ENCODE measurements at regions of chr1 and their contacts with region 1.

Region 1: GRCh38 chr1:201042779-201043461 is 19.4 kb upstream of the KIF21B start:
- DNase-seq: peak; percentile 41
- H3K4me3 ChIP-seq: no peak overlapping the region
- H3K27ac ChIP-seq: no peak overlapping the region
- H3K4me1 ChIP-seq: no peaks in the 10 kb centered on the region
- H3K27me3 ChIP-seq: no peaks in the 10 kb centered on the region
- CTCF ChIP-seq: peak; percentile 90 to 92

Region 2: DNA sequence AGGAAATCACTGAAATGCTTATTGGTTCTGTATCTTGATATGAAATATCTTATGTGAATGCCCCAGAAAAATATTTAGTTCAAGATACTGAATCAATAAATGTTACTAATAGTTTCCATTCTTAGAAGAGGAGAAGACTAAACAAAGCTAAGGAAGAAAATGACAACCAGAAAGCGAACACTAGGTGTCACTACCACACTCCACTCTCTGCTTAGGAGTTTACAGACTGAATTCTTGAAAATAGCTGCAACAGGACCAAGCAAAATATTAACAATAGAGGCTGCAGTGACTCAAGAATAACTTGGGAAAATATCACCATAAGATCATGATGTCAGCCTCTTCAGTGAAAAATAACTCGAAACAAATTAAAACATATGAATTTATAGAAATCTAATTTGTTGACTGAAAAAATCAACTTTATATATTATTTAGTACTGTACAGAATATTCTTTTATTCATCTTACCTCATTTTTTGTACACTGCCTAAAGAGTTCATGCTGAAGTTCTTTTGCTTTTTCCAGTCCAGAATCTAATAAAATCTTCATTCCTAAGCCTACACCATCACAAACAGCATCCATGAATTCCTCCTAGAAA is 484.0 kb before region 1 on chr1:
- CTCF ChIA-PET with region 1: interaction called, 4 read pairs
- dilution Hi-C with region 1: no loop called
- in situ Hi-C with region 1: loop called (anchors 25 kb)
- intact Hi-C with region 1: loop called (anchors 1 kb)
- DNase-seq: peak; percentile 35
- H3K4me3 ChIP-seq: no peak overlapping the region
- H3K27ac ChIP-seq: no peak overlapping the region
- H3K4me1 ChIP-seq: no peaks in the 10 kb centered on the region
- H3K27me3 ChIP-seq: no peaks in the 10 kb centered on the region
- CTCF ChIP-seq: peak; percentile 60 to 73

Region 3: GRCh38 chr1:200866521-200866920 is 176.4 kb before region 1 on chr1:
- CTCF ChIA-PET with region 1: no interaction called
- dilution Hi-C with region 1: no loop called
- in situ Hi-C with region 1: no loop called
- intact Hi-C with region 1: loop called (anchors 5 kb)
- DNase-seq: no peak
- H3K4me3 ChIP-seq: no peak overlapping the region
- H3K27ac ChIP-seq: no peak overlapping the region
- H3K4me1 ChIP-seq: no peaks in the 10 kb centered on the region
- H3K27me3 ChIP-seq: no peaks in the 10 kb centered on the region
- CTCF ChIP-seq: no peak

Region 4: DNA sequence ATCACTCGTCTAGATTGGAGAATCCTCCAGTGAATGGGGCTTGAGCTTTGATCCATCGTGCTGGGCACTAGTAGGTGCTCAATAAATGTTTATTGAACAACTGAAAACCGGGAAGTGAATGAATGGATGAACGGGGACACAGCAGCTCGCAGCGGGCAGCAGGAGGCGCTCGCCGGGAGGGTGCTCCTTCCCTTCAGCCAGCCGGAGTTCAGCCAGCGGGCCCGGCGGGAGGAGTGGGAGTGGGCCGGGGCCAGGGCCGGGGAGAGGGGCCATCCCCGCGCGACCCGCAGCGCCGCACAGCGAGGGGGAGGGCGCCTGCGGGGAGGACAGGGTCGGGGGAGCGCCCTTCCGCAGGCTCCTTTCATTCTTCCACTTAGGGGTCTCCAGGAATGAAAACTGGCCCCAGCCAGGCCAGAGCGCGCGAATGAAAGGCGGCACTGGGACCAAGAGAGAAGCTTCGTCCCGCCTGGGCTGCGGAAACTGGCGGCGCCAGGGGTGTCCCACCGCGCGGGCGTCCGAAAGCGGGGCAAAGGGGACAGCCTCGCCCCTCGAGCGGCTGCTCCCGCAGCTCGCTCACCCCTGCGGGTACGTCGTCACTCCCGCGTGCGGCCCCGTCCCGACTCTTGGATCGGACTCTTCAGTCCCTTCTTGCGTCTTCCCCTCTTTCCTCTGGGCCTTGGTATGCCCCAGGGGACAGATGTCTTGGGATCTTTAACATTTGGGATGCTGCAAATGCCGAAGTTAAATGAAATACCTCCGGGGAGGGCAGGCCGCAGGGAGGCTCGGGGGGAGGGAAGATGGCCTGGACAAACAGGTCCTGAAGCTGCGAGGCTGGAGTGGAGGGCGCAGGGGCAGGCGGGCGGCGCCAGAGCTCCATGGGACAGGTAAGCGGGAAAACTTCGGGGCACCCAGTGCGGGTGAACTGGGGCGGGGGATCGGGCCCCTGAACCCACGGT is 151.8 kb before region 1 on chr1:
- CTCF ChIA-PET with region 1: no interaction called
- dilution Hi-C with region 1: no loop called
- in situ Hi-C with region 1: loop called in 1 of 2 experiments (anchors 10 kb)
- intact Hi-C with region 1: loop called (anchors 1 kb)
- DNase-seq: peak; percentile 65
- H3K4me3 ChIP-seq: peak overlapping the region; percentile 38 to 60 (median 56)
- H3K27ac ChIP-seq: peak overlapping the region; percentile 55
- H3K4me1 ChIP-seq: peaks cover 51% of the 10 kb centered on the region
- H3K27me3 ChIP-seq: no peaks in the 10 kb centered on the region
- CTCF ChIP-seq: peak; percentile 32 to 63

Region 5: GRCh38 chr1:200979574-200980451 is 63.1 kb before region 1 on chr1:
- CTCF ChIA-PET with region 1: no interaction called
- dilution Hi-C with region 1: no loop called
- in situ Hi-C with region 1: loop called in 1 of 2 experiments (anchors 5 kb)
- intact Hi-C with region 1: no loop called
- DNase-seq: peak; percentile 8
- H3K4me3 ChIP-seq: no peak overlapping the region
- H3K27ac ChIP-seq: no peak overlapping the region
- H3K4me1 ChIP-seq: no peaks in the 10 kb centered on the region
- H3K27me3 ChIP-seq: no peaks in the 10 kb centered on the region
- CTCF ChIP-seq: peak; percentile 56 to 64

Region 6: DNA sequence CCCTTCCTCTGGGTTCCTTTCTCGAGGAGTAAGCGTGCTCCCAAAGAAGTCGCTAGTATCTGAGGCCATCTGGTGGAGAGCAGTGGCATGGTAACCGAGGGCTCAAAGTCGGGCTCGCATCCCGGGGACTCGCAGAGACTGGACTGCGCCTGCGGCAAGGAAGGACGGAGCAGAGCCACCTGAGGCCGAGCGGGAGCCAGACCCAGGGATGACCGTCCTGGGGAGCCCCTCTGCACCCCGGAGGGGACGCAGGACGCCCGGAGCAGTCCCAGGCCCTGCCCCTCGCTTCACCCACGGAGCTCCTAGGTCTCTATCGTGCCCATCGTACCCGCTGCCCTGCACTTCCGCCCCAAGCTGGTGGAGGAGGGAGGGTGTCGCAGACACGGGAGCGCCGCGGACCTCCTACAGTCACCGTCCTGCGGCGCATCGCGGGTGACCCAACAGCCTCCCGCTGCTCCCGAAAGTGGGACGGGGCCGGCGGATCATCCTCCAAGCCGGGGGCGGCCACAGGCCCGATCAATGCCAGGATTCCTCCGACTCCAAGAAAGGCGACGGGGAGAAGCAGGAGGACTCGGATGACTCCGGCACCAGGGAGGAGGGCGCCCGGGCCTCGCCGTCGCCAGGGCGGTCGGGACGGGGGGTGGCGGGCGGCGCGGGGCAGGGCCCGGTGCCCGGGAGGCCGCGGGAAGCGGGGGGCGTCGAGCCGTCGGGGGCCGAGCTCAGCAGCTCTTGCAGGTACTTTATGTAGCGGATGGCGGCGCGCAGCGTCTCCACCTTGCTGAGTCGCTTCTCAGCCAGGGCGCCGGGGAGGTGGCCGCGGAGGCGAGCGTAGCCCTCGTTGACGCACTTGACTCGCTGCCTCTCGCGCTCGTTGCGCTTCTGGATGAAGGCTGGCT is 71.6 kb after region 1 on chr1:
- CTCF ChIA-PET with region 1: interaction called, 3 read pairs
- dilution Hi-C with region 1: no loop called
- in situ Hi-C with region 1: no loop called
- intact Hi-C with region 1: loop called (anchors 1 kb)
- DNase-seq: peak; percentile 91
- H3K4me3 ChIP-seq: peak overlapping the region; percentile 31 to 77 (median 63)
- H3K27ac ChIP-seq: no peak overlapping the region
- H3K4me1 ChIP-seq: peaks cover 3% of the 10 kb centered on the region
- H3K27me3 ChIP-seq: no peaks in the 10 kb centered on the region
- CTCF ChIP-seq: peak; percentile 80 to 92